PC-9 (cell line): ENCODE measurements at regions of chr6 and their contacts with region 1.

Region 1: DNA sequence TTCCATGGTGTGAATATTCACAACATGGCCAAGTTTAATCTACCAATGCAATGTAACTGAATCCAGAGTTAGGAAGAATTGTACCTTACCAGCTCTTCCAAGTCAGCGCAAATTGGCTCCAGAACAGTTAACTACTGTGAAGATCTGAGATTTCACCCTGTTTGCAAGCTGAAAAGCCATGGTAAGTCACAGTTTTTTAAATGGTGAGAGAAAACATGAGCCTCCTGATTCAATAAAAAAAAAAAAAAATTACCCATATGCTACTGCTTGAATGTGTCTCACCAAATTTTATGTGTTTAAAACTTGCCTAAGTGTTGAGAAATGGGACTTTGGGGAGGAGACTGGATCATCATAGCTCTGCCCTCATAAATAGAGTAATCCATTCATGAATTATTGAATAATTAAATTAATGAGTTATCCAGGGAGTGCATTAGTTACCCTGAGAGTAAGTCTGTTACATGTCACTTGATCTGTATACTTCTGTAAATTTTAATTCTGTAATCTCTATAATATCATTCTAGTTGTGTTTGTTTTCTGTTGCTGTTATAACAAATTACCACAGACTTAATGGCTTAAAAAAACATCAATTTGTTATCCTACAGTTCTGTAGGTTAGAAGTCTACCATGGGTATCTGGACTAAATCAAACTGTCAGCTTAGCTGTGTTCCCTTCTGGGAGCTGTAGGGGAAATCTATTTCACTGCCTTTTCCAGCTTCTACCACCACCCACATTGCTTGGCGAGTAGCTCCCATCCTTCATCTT is 1355.9 kb downstream of the GRIK2 start:
- DNase-seq: no peak
- H3K4me3 ChIP-seq: no peak overlapping the region
- H3K27ac ChIP-seq: no peak overlapping the region
- H3K4me1 ChIP-seq: no peaks in the 10 kb centered on the region
- H3K27me3 ChIP-seq: no peaks in the 10 kb centered on the region
- CTCF ChIP-seq: no peak

Region 2: DNA sequence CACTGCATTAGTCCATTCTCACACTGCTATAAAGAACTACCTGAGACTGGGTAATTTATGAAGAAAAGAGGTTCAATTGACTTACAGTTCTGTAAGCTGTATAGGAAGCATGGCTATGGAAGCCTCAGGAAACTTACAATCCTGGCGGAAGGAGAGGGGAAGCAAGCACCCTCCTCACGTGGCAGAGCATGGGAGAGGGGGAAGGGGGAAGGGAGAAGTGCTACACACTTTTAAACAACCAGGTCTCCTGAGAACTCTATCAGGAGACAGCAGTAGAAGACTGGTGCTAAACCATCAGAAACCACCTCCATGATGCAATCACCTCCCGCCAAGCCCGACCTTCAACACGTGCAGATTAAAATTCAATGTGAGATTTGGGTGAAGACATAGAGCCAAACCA is 861.9 kb before region 1 on chr6:
- CTCF ChIA-PET with region 1: no interaction called
- POLR2A ChIA-PET with region 1: no interaction called
- intact Hi-C with region 1: no loop called
- DNase-seq: no peak
- H3K4me3 ChIP-seq: no peak overlapping the region
- H3K27ac ChIP-seq: no peak overlapping the region
- H3K4me1 ChIP-seq: no peaks in the 10 kb centered on the region
- H3K27me3 ChIP-seq: no peaks in the 10 kb centered on the region
- CTCF ChIP-seq: no peak

Region 3: DNA sequence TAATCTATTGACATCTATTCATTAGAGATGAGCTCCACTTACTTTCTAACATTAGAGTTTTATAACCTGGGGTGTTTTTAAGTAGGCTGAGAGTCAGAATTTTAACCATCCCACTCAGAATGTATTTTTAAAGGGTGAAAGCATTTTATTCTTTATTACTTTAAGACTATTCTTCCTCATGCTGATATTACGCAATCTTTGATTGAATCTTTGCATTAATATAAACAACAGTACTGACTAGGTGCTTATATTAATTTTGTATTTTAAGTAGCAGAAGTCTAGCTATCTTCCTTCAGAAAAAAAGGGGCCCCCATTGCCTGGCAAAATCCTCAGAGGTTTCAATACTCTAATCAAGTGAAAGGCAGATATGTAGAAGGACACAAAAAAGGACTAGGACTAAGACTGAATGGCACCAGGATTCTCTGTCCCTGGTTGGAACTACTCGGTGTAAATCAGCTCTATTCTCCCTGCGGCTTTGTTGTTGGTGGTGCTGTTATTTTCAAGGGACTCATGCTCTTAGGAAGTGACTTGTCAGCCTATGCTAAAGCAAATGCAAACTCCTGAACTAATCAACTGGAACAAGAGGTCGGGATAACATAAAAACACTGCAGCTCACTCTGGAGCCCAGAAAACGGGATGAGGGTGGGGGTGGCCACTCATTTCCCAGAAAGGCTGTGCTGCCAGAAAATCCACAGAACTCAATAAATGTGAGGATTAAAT is 31.5 kb before region 1 on chr6:
- CTCF ChIA-PET with region 1: no interaction called
- POLR2A ChIA-PET with region 1: no interaction called
- intact Hi-C with region 1: no loop called
- DNase-seq: no peak
- H3K4me3 ChIP-seq: no peak overlapping the region
- H3K27ac ChIP-seq: no peak overlapping the region
- H3K4me1 ChIP-seq: no peaks in the 10 kb centered on the region; the same call in 1 of the 2 replicates
- H3K27me3 ChIP-seq: no peaks in the 10 kb centered on the region
- CTCF ChIP-seq: no peak

Region 4: GRCh38 chr6:102736941-102737368 is 12.4 kb before region 1 on chr6:
- CTCF ChIA-PET with region 1: no interaction called
- POLR2A ChIA-PET with region 1: interaction called, 17 read pairs
- intact Hi-C with region 1: no loop called
- DNase-seq: no peak
- H3K4me3 ChIP-seq: no peak overlapping the region
- H3K27ac ChIP-seq: no peak overlapping the region
- H3K4me1 ChIP-seq: no peaks in the 10 kb centered on the region
- H3K27me3 ChIP-seq: no peaks in the 10 kb centered on the region
- CTCF ChIP-seq: no peak

Region 5: GRCh38 chr6:103255132-103255531 is 505.7 kb after region 1 on chr6:
- CTCF ChIA-PET with region 1: no interaction called
- POLR2A ChIA-PET with region 1: no interaction called
- intact Hi-C with region 1: no loop called
- DNase-seq: no peak
- H3K4me3 ChIP-seq: no peak overlapping the region
- H3K27ac ChIP-seq: no peak overlapping the region
- H3K4me1 ChIP-seq: no peaks in the 10 kb centered on the region
- H3K27me3 ChIP-seq: no peaks in the 10 kb centered on the region
- CTCF ChIP-seq: no peak